Left ventricle myocardium inferior (tissue), 1 donor: ENCODE measurements at regions of chr12 and their contacts with region 1.

Region 1: GRCh38 chr12:110254971-110255540 is 26.0 kb upstream of the ATP2A2 start:
- DNase-seq: no peak
- H3K4me3 ChIP-seq: no peak overlapping the region
- H3K27ac ChIP-seq: peak overlapping the region; percentile 94
- H3K4me1 ChIP-seq: peaks cover 57% of the 10 kb centered on the region
- H3K27me3 ChIP-seq: no peaks in the 10 kb centered on the region
- CTCF ChIP-seq: no peak

Region 2: DNA sequence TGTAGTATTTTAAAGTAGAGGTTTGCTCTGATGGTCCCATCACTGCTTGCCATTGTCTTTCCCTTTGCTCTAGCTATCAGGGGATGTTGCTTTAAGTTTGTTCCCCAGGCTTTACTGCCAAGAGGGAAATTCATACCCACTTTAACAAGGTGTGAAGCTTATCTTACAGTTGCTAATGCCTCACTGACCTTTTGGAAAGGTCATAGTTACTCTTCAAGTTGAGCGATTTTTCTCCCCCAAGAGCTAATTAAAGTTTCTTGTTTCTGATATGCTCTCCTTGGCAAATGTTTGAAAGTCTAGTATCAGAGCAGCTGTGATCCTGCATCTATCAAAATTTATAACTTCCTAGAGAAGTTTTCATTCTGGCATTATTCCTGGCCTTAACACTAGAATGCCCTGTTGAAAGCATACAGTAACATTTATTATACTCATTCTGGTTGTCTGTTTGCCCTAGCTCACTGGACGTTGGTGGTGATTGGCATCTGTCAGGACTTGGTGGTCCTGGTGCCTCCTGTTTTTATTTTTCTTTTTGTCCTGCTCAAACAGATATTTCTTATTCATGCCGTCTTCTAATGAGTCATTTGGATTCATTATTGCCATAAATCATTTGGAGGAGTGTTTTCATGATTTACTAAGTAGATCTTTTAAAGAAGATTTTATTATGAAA is 34.1 kb after region 1 on chr12:
- intact Hi-C with region 1: loop called (anchors 2 kb)
- DNase-seq: no peak
- H3K4me3 ChIP-seq: peak overlapping the region; percentile 96
- H3K27ac ChIP-seq: peak overlapping the region; percentile 97
- H3K4me1 ChIP-seq: peaks cover 98% of the 10 kb centered on the region
- H3K27me3 ChIP-seq: no peaks in the 10 kb centered on the region
- CTCF ChIP-seq: no peak